Spleen (tissue), 13 donors: ENCODE measurements at regions of chrX and their contacts with region 1.

Region 1: GRCh38 chrX:1537035-1537715 is at the start of gene P2RY8:
- DNase-seq: peak; percentile 95
- H3K4me3 ChIP-seq: peak within 1 kb of the TSS; percentile 56 to 80 (median 74)
- H3K27ac ChIP-seq: peak within 1 kb of the TSS; percentile 89 to 94 (median 90)
- H3K4me1 ChIP-seq: peaks cover 5 to 44% (median 20%) of the 10 kb centered on the region in 6 donors
- H3K27me3 ChIP-seq: no peaks in the 10 kb centered on the region
- CTCF ChIP-seq: peak in 2 of 11 experiments; percentile 24
- POLR2A ChIP-seq: peak in 2 of 3 donors; percentile 31 to 50
- total RNA-seq, gene P2RY8: 19.5 to 32.2 (median 30.0) TPM

Region 2: DNA sequence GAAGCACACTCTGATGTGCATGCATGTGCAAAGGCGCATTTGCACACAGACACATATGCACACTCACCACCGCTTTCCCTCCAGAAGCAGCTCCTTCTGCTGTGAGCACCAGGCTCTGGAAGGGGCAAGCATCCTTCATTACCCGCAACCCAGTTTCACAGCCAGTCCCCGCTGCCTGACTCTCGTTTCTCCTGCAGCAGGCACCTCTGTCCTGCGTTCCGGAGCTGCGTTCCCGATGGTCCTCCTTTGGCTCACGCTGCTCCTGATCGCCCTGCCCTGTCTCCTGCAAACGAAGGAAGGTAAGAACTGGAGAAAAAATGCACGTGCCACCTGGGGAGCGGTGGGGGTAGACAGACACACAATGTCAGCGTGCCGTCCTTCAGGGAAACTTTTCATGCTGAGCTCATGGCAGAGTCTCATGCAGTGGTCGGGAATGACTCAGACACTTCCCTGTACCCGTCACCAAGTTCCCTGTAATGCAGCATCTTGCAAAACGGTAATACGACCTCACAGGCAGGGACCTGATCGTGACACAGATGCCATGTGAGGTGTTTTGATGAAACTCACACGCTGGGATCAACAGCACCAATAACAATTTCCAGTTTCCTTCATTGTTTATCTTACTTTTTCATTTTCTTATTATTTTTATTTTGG is 195.5 kb before region 1 on chrX:
- intact Hi-C with region 1: no loop called
- DNase-seq: no peak
- H3K4me3 ChIP-seq: no peak overlapping the region
- H3K27ac ChIP-seq: no peak overlapping the region
- H3K4me1 ChIP-seq: peaks cover 0 to 22% (median 7%) of the 10 kb centered on the region in 6 donors
- H3K27me3 ChIP-seq: peaks cover 0 to 6% (median 0%) of the 10 kb centered on the region in 7 donors
- CTCF ChIP-seq: no peak
- POLR2A ChIP-seq: no peak

Region 3: GRCh38 chrX:1468250-1468772 is 68.9 kb before region 1 on chrX:
- intact Hi-C with region 1: loop called (anchors 10 kb)
- DNase-seq: peak; percentile 90
- H3K4me3 ChIP-seq: peak overlapping the region in 1 of 8 donors; percentile 41
- H3K27ac ChIP-seq: peak overlapping the region; percentile 40 to 90 (median 68)
- H3K4me1 ChIP-seq: peaks cover 25 to 87% (median 80%) of the 10 kb centered on the region in 6 donors
- H3K27me3 ChIP-seq: no peaks in the 10 kb centered on the region
- CTCF ChIP-seq: peak in 1 of 11 experiments; percentile 11
- POLR2A ChIP-seq: no peak

Region 4: DNA sequence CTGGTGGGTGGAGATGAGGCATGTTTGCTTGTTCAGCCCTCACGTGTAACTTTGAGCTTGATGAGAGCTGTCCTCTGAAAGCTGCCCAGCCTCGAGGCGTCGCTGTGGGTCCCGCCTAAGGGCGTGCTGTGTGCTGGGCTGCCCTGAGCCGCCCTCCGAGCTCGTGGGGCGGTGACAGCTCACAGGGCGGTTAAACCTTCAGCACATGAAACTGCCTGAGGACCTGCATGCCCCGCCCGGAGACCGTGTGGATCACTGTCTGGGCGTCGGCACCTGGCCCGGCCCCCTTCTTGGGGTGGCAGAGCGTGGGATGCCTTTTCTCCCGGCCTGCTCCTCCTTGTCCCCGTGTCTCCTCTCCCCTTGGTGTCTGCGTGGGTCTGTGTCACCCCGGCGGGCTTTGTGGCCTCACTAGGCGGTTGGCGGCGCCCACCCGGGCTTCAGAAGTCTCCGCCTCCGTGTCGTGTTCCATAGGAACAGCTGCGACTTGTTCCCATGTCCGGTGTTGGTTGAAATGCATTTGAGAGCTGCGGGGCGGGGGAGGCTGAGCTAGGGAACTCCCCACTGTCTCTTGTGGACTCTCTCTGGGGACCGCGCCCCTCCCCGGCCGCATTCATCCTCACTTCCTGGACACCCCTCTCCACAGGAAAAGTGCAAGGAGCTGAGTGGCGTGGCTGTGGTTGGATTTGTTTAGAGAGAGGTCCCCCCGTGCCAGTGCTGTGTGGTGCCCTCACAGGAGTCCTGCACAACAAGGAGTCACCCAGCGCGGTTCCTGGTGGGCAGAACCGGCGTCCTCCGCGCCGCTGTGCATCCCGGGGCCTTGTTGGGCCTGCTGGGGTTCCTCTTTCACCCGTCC is 61.1 kb after region 1 on chrX:
- intact Hi-C with region 1: no loop called
- DNase-seq: peak; percentile 69
- H3K4me3 ChIP-seq: no peak overlapping the region
- H3K27ac ChIP-seq: peak overlapping the region in 4 of 8 donors; percentile 6 to 33 (median 20)
- H3K4me1 ChIP-seq: peaks cover 13 to 52% (median 23%) of the 10 kb centered on the region in 6 donors
- H3K27me3 ChIP-seq: no peaks in the 10 kb centered on the region
- CTCF ChIP-seq: no peak
- POLR2A ChIP-seq: no peak

Region 5: GRCh38 chrX:1657367-1658070 is 120.3 kb after region 1 on chrX:
- intact Hi-C with region 1: no loop called
- DNase-seq: peak; percentile 86
- H3K4me3 ChIP-seq: peak overlapping the region; percentile 1 to 64 (median 30)
- H3K27ac ChIP-seq: peak overlapping the region; percentile 21 to 84 (median 72)
- H3K4me1 ChIP-seq: peaks cover 0 to 52% (median 8%) of the 10 kb centered on the region in 6 donors
- H3K27me3 ChIP-seq: no peaks in the 10 kb centered on the region
- CTCF ChIP-seq: no peak
- POLR2A ChIP-seq: peak in 1 of 3 donors; percentile 61

Region 6: DNA sequence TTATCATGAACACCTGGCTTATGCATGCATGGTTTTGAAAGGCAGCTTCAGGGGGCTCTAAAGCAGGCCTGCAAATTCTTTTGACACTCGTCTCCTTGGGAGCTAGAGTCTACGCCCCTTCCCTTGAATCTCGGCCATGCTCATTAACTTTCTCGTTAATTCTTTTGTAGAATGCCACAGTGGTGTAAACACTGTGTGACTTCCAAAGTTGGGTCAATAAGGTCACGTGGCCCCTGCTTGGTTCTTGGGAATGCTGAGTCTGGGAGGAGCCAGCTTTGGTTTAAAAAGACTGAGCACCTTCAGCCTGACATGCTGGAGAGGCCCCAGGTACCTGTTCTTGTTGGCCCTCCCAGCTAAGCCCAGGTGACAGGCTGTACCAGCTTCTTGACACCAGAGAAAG is 735.2 kb after region 1 on chrX:
- intact Hi-C with region 1: no loop called
- DNase-seq: no peak
- H3K4me3 ChIP-seq: no peak overlapping the region
- H3K27ac ChIP-seq: no peak overlapping the region
- H3K4me1 ChIP-seq: no peaks in the 10 kb centered on the region
- H3K27me3 ChIP-seq: no peaks in the 10 kb centered on the region
- CTCF ChIP-seq: no peak
- POLR2A ChIP-seq: no peak